Caco-2 (cell line): ENCODE measurements at regions of chrX and their contacts with region 1.

Region 1: GRCh38 chrX:53594354-53594753 is 92.2 kb downstream of the HUWE1 start:
- DNase-seq: no peak
- H3K4me3 ChIP-seq: no peak overlapping the region
- H3K4me3 Mint-ChIP-seq: no peak overlapping the region
- H3K27ac Mint-ChIP-seq: no peak overlapping the region
- H3K4me1 ChIP-seq: no peaks in the 10 kb centered on the region
- H3K4me1 Mint-ChIP-seq: no peaks in the 10 kb centered on the region
- H3K27me3 ChIP-seq: no peaks in the 10 kb centered on the region
- H3K27me3 Mint-ChIP-seq: peaks cover 3% of the 10 kb centered on the region
- CTCF ChIP-seq: no peak

Region 2: GRCh38 chrX:53481816-53482465 is 112.4 kb before region 1 on chrX:
- CTCF ChIA-PET with region 1: no interaction called
- POLR2A ChIA-PET with region 1: no interaction called
- intact Hi-C with region 1: no loop called
- DNase-seq: peak; percentile 36 to 43
- H3K4me3 ChIP-seq: no peak overlapping the region
- H3K4me3 Mint-ChIP-seq: no peak overlapping the region
- H3K27ac Mint-ChIP-seq: no peak overlapping the region
- H3K4me1 ChIP-seq: no peaks in the 10 kb centered on the region
- H3K4me1 Mint-ChIP-seq: no peaks in the 10 kb centered on the region
- H3K27me3 ChIP-seq: no peaks in the 10 kb centered on the region
- H3K27me3 Mint-ChIP-seq: no peaks in the 10 kb centered on the region
- CTCF ChIP-seq: peak in 1 of 2 experiments; percentile 63

Region 3: GRCh38 chrX:53526999-53527398 is 67.4 kb before region 1 on chrX:
- CTCF ChIA-PET with region 1: no interaction called
- POLR2A ChIA-PET with region 1: no interaction called
- intact Hi-C with region 1: loop called (anchors 1 kb)
- DNase-seq: no peak
- H3K4me3 ChIP-seq: no peak overlapping the region
- H3K4me3 Mint-ChIP-seq: no peak overlapping the region
- H3K27ac Mint-ChIP-seq: no peak overlapping the region
- H3K4me1 ChIP-seq: no peaks in the 10 kb centered on the region
- H3K4me1 Mint-ChIP-seq: no peaks in the 10 kb centered on the region
- H3K27me3 ChIP-seq: no peaks in the 10 kb centered on the region
- H3K27me3 Mint-ChIP-seq: peaks cover 6% of the 10 kb centered on the region
- CTCF ChIP-seq: no peak